ENCODE measurements at regions of chr9 and their contacts with region 1.

Region 1: GRCh38 chr9:394347-395052 is 179.8 kb downstream of the DOCK8 start:
- DNase-seq: no peak
- H3K4me3 ChIP-seq: no peak overlapping the region
- H3K4me3 Mint-ChIP-seq: no peak overlapping the region
- H3K27ac ChIP-seq: peak overlapping the region in 1 of 2 donors; percentile 38
- H3K27ac Mint-ChIP-seq: peak overlapping the region in 3 of 7 donors; percentile 27 to 54 (median 54)
- H3K4me1 ChIP-seq: no peaks in the 10 kb centered on the region
- H3K4me1 Mint-ChIP-seq: no peaks in the 10 kb centered on the region
- H3K27me3 ChIP-seq: no peaks in the 10 kb centered on the region
- H3K27me3 Mint-ChIP-seq: peaks cover 0 to 1% (median 0%) of the 10 kb centered on the region in 3 donors
- CTCF ChIP-seq: no peak

Region 2: DNA sequence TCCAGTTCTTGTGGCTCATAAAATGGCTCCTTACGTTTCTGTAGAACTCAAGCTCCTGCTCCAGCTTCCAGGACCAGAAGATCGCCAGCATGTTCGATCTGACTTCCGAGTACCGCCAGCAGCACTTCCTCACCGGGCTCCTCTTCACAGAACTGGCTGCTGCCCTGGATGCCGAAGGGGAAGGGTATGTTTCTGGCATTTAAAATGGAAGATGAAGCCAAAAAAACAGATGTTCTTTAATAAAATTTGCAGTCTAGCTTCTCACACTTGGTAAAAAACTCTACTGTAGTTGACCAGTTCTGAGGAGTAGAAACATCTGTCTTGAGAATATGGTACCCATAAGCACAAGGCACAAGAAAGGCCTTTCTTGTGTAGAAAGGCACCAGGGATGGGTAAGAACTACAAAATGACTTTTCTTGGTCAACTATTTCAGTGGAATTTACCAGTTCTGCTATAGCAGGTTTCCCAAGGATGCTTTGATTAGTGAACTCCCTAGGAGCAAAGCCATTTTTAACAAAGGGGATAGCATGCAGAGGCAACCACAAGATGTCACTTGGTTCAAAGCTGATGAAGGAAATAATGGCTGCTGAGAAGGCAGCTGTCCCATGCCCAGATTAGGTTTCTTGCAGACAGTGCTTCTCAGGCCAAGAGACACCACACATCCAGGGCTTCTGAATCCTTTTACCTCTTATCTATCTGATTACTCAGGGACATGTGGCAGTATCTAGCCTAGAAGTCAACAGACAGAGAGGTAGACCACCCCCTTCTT is 12.6 kb after region 1 on chr9:
- intact Hi-C with region 1: no loop called
- DNase-seq: no peak
- H3K4me3 ChIP-seq: no peak overlapping the region
- H3K4me3 Mint-ChIP-seq: no peak overlapping the region
- H3K27ac ChIP-seq: no peak overlapping the region
- H3K27ac Mint-ChIP-seq: peak overlapping the region in 3 of 7 donors; percentile 49 to 58 (median 52)
- H3K4me1 ChIP-seq: no peaks in the 10 kb centered on the region
- H3K4me1 Mint-ChIP-seq: no peaks in the 10 kb centered on the region
- H3K27me3 ChIP-seq: no peaks in the 10 kb centered on the region
- H3K27me3 Mint-ChIP-seq: no peaks in the 10 kb centered on the region
- CTCF ChIP-seq: no peak

Region 3: GRCh38 chr9:447230-448025 is 52.9 kb after region 1 on chr9:
- intact Hi-C with region 1: loop called in 1 of 2 experiments (anchors 5 kb)
- DNase-seq: no peak
- H3K4me3 ChIP-seq: no peak overlapping the region
- H3K4me3 Mint-ChIP-seq: no peak overlapping the region
- H3K27ac ChIP-seq: no peak overlapping the region
- H3K27ac Mint-ChIP-seq: peak overlapping the region in 2 of 7 donors; percentile 27 to 61
- H3K4me1 ChIP-seq: no peaks in the 10 kb centered on the region
- H3K4me1 Mint-ChIP-seq: no peaks in the 10 kb centered on the region
- H3K27me3 ChIP-seq: no peaks in the 10 kb centered on the region
- H3K27me3 Mint-ChIP-seq: no peaks in the 10 kb centered on the region
- CTCF ChIP-seq: no peak

Measured in CD14-positive monocyte (primary cell).